ACHN (cell line): ENCODE measurements at regions of chr1 and their contacts with region 1.

Region 1: DNA sequence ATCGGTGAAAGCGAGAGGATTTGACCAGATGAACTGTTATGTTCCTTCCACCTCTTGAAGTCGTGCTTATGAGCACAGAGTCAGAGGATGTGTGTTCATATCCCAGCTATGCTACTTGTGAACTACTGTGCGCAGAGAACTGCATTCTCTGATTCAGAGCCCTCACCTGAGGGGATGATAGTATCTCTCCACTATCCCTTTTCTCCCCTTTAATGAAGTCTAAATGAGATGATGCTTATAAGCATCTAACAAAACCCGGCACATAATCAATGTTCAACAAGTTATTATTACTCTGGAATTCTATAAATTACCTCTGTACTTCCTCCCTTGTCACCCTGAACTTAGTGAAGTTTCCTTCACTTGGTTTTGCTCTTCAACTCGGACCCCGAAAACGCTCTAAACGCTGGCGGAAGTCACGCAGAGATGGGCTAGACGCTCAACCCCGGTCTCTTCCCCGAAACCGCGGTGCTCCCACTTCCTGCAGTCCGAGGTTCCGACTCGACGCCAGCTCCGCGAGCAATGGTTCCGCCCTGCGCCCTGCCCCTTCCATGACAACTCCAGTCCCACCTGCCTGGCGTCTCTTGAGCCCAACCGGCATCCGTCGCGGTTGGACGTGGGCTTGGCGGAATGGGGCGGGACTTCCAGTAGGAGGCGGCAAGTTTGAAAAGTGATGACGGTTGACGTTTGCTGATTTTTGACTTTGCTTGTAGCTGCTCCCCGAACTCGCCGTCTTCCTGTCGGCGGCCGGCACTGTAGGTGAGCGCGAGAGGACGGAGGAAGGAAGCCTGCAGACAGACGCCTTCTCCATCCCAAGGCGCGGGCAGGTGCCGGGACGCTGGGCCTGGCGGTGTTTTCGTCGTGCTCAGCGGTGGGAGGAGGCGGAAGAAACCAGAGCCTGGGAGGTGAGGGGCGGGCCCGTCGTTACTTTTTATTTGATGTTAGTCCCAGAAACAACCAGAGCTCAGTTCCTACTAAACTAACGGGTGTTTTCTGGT is at the start of gene NUF2:
- DNase-seq: peak; percentile 100

Region 2: GRCh38 chr1:162854245-162854882 is 467.2 kb before region 1 on chr1:
- in situ Hi-C with region 1: loop called (anchors 25 kb)
- DNase-seq: peak; percentile 83